Activated naive CD4-positive, alpha-beta T cell treated with anti-CD3 and anti-CD28 coated beads for 36 hours (primary cell): ENCODE measurements at regions of chr6 and their contacts with region 1.

Region 1: GRCh38 chr6:16163535-16164300 is 34.8 kb downstream of the MYLIP start:
- DNase-seq: peak; percentile 46
- H3K4me3 Mint-ChIP-seq: no peak overlapping the region
- H3K27ac Mint-ChIP-seq: no peak overlapping the region
- H3K4me1 Mint-ChIP-seq: peaks cover 35% of the 10 kb centered on the region
- H3K27me3 Mint-ChIP-seq: peaks cover 10% of the 10 kb centered on the region

Region 2: GRCh38 chr6:15887491-15888461 is 275.9 kb before region 1 on chr6:
- CTCF ChIA-PET with region 1: no interaction called
- intact Hi-C with region 1: no loop called
- DNase-seq: no peak
- H3K4me3 Mint-ChIP-seq: no peak overlapping the region
- H3K27ac Mint-ChIP-seq: no peak overlapping the region
- H3K4me1 Mint-ChIP-seq: no peaks in the 10 kb centered on the region
- H3K27me3 Mint-ChIP-seq: no peaks in the 10 kb centered on the region

Region 3: DNA sequence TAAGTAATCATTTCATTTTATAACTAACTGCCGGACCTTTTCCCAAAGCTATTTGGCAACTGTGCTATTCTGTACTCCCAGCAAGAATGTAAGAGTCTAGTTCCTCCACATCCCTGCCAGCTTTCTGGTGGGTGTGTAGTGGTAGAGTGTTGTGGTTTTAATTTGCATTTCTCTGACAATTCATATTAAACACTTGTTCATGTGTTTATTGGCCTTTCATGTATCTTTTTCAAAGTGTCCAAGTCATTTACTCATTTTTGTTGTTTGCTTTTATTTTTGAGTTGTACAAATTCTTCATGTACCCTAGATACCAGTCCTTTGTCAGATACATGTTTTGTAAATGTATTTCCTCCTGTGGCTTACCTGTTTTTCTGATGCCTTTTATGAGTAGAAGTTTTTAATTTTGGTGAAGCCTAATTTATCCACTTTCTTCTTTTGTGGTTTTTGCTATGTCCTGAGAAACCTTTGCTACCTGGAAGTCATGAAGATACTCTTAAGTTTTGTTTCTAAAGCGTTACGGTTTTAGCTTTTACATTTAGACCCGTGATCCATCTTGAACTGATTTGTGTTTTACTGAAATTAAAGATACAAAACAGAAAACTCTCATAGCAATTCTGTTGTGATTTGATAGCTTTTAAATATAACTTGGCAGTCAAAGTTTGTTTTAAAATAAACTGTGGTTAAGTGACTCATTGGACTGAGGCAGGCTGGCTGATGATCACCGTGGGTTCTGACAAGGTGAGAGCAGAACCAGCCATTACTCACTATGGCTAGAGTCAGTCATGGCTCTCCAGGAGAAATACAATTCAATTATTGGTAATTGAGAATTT is 26.9 kb before region 1 on chr6:
- CTCF ChIA-PET with region 1: interaction called, 3 read pairs
- intact Hi-C with region 1: loop called (anchors 1 kb)
- DNase-seq: peak; percentile 76
- H3K4me3 Mint-ChIP-seq: peak overlapping the region; percentile 55
- H3K27ac Mint-ChIP-seq: peak overlapping the region; percentile 87
- H3K4me1 Mint-ChIP-seq: peaks cover 70% of the 10 kb centered on the region
- H3K27me3 Mint-ChIP-seq: no peaks in the 10 kb centered on the region